ENCODE measurements at regions of chr20 and their contacts with region 1.

Region 1: GRCh38 chr20:53939572-53940359 is 130.6 kb downstream of the BCAS1 start:
- DNase-seq: peak; percentile 98
- H3K4me3 ChIP-seq: peak overlapping the region; percentile 25
- H3K27ac ChIP-seq: peak overlapping the region; percentile 71
- H3K4me1 ChIP-seq: peaks cover 72% of the 10 kb centered on the region
- H3K27me3 ChIP-seq: no peaks in the 10 kb centered on the region
- CTCF ChIP-seq: peak; percentile 91

Region 2: GRCh38 chr20:53149148-53149889 is 790.4 kb before region 1 on chr20:
- CTCF ChIA-PET with region 1: no interaction called
- POLR2A ChIA-PET with region 1: no interaction called
- intact Hi-C with region 1: loop called (anchors 10 kb)
- DNase-seq: peak; percentile 97
- H3K4me3 ChIP-seq: peak overlapping the region; percentile 18
- H3K27ac ChIP-seq: peak overlapping the region; percentile 79
- H3K4me1 ChIP-seq: peaks cover 42% of the 10 kb centered on the region
- H3K27me3 ChIP-seq: no peaks in the 10 kb centered on the region
- CTCF ChIP-seq: no peak

Region 3: DNA sequence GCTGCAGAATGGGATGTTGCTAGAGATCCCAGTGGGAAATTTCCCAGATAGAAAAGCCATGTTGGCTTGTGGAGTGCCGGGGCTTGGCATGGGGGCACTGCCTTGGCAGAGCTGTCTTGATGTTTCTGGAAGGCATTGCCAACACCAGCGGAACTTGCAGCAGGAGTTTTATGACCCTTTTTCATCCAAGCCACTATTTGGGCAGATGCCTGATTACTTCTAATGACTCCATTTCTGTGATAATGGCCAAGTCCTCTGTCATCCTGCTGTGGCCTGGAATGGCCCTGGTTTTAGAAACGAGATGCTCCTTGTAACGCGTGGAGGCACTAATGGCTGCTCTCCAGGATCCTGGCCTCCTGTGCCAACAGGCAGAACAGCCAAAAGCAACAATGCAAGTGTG is 575.1 kb before region 1 on chr20:
- CTCF ChIA-PET with region 1: no interaction called
- POLR2A ChIA-PET with region 1: no interaction called
- intact Hi-C with region 1: no loop called
- DNase-seq: no peak
- H3K4me3 ChIP-seq: no peak overlapping the region
- H3K27ac ChIP-seq: no peak overlapping the region
- H3K4me1 ChIP-seq: peaks cover 14% of the 10 kb centered on the region
- H3K27me3 ChIP-seq: no peaks in the 10 kb centered on the region
- CTCF ChIP-seq: no peak

Region 4: DNA sequence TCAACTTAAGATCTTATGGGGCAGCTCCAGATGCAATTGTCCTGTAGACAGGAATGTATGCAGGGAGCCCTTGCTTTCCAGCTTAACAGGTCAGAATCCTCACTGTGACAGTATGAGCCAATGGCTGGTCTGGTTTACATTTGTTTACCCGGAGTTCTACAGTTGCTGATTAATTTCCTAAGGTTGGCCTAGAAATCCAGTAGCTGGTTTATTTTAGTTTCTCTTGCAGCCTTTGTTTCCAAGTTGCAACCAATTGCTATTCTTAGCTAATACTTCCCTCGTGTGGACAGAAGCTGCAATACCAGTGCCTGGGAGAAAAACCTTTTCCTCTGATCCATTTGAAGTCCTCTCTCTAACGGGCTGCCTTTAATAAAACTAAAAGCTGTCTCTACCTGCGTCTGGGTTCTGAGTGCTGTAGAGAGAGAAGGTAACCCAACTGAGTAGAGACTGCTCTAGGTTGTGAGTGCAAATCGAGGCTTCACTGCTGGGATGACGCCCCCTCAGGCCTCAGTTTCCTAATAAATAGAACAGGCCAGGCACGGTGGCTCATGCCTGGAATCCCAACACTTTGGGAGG is 392.0 kb before region 1 on chr20:
- CTCF ChIA-PET with region 1: interaction called, 11 read pairs
- POLR2A ChIA-PET with region 1: no interaction called
- intact Hi-C with region 1: no loop called
- DNase-seq: peak; percentile 87
- H3K4me3 ChIP-seq: no peak overlapping the region
- H3K27ac ChIP-seq: no peak overlapping the region
- H3K4me1 ChIP-seq: peaks cover 9% of the 10 kb centered on the region
- H3K27me3 ChIP-seq: no peaks in the 10 kb centered on the region
- CTCF ChIP-seq: peak; percentile 90

Region 5: GRCh38 chr20:53578492-53579222 is 361.1 kb before region 1 on chr20:
- CTCF ChIA-PET with region 1: interaction called, 19 read pairs
- POLR2A ChIA-PET with region 1: no interaction called
- intact Hi-C with region 1: loop called (anchors 1 kb)
- DNase-seq: peak; percentile 94
- H3K4me3 ChIP-seq: peak overlapping the region; percentile 16
- H3K27ac ChIP-seq: peak overlapping the region; percentile 79
- H3K4me1 ChIP-seq: peaks cover 50% of the 10 kb centered on the region
- H3K27me3 ChIP-seq: no peaks in the 10 kb centered on the region
- CTCF ChIP-seq: peak; percentile 85

Region 6: GRCh38 chr20:53750827-53751619 is 188.7 kb before region 1 on chr20:
- CTCF ChIA-PET with region 1: no interaction called
- POLR2A ChIA-PET with region 1: no interaction called
- intact Hi-C with region 1: loop called (anchors 10 kb)
- DNase-seq: peak; percentile 81
- H3K4me3 ChIP-seq: no peak overlapping the region
- H3K27ac ChIP-seq: peak overlapping the region; percentile 75
- H3K4me1 ChIP-seq: peaks cover 59% of the 10 kb centered on the region
- H3K27me3 ChIP-seq: no peaks in the 10 kb centered on the region
- CTCF ChIP-seq: no peak

Region 7: GRCh38 chr20:53855733-53856132 is 84.0 kb before region 1 on chr20:
- CTCF ChIA-PET with region 1: no interaction called
- POLR2A ChIA-PET with region 1: no interaction called
- intact Hi-C with region 1: no loop called
- DNase-seq: no peak
- H3K4me3 ChIP-seq: no peak overlapping the region
- H3K27ac ChIP-seq: peak overlapping the region; percentile 44
- H3K4me1 ChIP-seq: peaks cover 32% of the 10 kb centered on the region
- H3K27me3 ChIP-seq: no peaks in the 10 kb centered on the region
- CTCF ChIP-seq: no peak

Region 8: DNA sequence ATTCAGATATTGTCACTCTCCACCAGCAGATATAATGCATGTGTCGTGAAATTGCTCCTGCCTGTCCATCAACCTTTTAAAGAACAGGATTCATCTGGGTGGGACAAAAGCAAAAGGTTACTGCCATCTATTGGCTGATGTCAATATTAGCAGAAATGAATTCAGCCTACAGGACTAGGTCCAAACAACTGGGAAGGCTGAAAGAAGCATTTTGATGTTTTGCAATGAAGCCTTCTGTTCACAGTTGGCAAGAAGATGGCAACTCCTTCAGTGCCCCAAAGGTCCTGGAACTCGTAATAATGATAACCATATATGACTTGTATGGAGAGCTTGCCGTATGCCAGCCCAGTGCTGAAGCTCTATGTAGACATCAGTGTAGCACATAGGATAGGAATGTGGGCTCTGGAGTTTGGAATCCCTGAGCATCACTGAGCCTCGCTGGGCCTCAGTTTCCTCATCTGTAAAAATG is 123.1 kb after region 1 on chr20:
- CTCF ChIA-PET with region 1: interaction called, 4 read pairs
- POLR2A ChIA-PET with region 1: no interaction called
- intact Hi-C with region 1: loop called (anchors 5 kb)
- DNase-seq: peak; percentile 84
- H3K4me3 ChIP-seq: no peak overlapping the region
- H3K27ac ChIP-seq: no peak overlapping the region
- H3K4me1 ChIP-seq: peaks cover 33% of the 10 kb centered on the region
- H3K27me3 ChIP-seq: no peaks in the 10 kb centered on the region
- CTCF ChIP-seq: peak; percentile 76

Region 9: DNA sequence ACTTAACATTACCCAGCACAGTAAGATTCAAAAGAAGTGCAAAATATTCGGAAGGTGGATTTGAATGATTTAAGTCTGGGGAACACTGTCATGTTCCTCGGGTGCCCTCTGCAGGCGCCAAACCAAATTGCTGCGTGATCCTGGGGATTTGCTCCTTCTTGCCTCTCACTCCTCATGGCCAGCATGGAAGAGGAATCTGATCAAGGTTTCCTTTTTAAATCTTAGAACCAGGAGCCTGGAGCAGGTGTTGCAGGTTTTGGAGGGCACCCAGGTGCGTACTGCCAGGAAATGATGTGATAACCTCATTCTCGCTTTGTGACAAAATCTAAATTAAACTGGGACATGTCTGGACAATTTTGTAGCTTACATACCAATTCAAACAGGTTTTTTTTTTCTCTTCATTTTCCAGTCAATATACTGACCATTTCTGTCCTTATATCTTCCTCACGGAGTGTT is 260.0 kb after region 1 on chr20:
- CTCF ChIA-PET with region 1: no interaction called
- POLR2A ChIA-PET with region 1: no interaction called
- intact Hi-C with region 1: loop called (anchors 5 kb)
- DNase-seq: peak; percentile 79
- H3K4me3 ChIP-seq: no peak overlapping the region
- H3K27ac ChIP-seq: no peak overlapping the region
- H3K4me1 ChIP-seq: no peaks in the 10 kb centered on the region
- H3K27me3 ChIP-seq: no peaks in the 10 kb centered on the region
- CTCF ChIP-seq: peak; percentile 93